Naive thymus-derived CD4-positive, alpha-beta T cell (primary cell): ENCODE measurements at regions of chr1 and their contacts with region 1.

Region 1: GRCh38 chr1:186375088-186375953 is at the starts of genes ODR4 and TPR:
- DNase-seq: peak; percentile 92 to 98 (median 97)
- ATAC-seq: peak; percentile 88
- H3K4me3 ChIP-seq: peak within 1 kb of the TSS; percentile 98
- H3K4me3 Mint-ChIP-seq: peak within 1 kb of the TSS; percentile 90 to 99 (median 98)
- H3K27ac ChIP-seq: peak within 1 kb of the TSS; percentile 93
- H3K27ac Mint-ChIP-seq: peak within 1 kb of the TSS; percentile 91 to 99 (median 97)
- H3K4me1 ChIP-seq: peaks cover 24 to 25% of the 10 kb centered on the region in 2 donors
- H3K4me1 Mint-ChIP-seq: peaks cover 28 to 70% (median 54%) of the 10 kb centered on the region in 7 donors
- H3K27me3 ChIP-seq: no peaks in the 10 kb centered on the region
- H3K27me3 Mint-ChIP-seq: no peaks in the 10 kb centered on the region
- total RNA-seq, gene ODR4: 13.6 to 19.6 (median 18.3) TPM
- total RNA-seq, gene TPR: 118 to 195 (median 158) TPM

Region 2: GRCh38 chr1:184973272-184974055 is 1401.9 kb before region 1 on chr1:
- CTCF ChIA-PET with region 1: no interaction called
- POLR2A ChIA-PET with region 1: no interaction called
- intact Hi-C with region 1: loop called in 1 of 2 experiments (anchors 10 kb)
- DNase-seq: peak in 1 of 9 donors; percentile 36
- ATAC-seq: peak; percentile 73
- H3K4me3 ChIP-seq: peak overlapping the region; percentile 63
- H3K4me3 Mint-ChIP-seq: peak overlapping the region; percentile 82 to 96 (median 90)
- H3K27ac ChIP-seq: peak overlapping the region; percentile 7
- H3K27ac Mint-ChIP-seq: peak overlapping the region; percentile 11 to 94 (median 58)
- H3K4me1 ChIP-seq: peaks cover 0 to 24% of the 10 kb centered on the region in 2 donors
- H3K4me1 Mint-ChIP-seq: peaks cover 9 to 56% (median 21%) of the 10 kb centered on the region in 7 donors
- H3K27me3 ChIP-seq: no peaks in the 10 kb centered on the region
- H3K27me3 Mint-ChIP-seq: peaks cover 12 to 38% (median 27%) of the 10 kb centered on the region in 5 donors

Region 3: DNA sequence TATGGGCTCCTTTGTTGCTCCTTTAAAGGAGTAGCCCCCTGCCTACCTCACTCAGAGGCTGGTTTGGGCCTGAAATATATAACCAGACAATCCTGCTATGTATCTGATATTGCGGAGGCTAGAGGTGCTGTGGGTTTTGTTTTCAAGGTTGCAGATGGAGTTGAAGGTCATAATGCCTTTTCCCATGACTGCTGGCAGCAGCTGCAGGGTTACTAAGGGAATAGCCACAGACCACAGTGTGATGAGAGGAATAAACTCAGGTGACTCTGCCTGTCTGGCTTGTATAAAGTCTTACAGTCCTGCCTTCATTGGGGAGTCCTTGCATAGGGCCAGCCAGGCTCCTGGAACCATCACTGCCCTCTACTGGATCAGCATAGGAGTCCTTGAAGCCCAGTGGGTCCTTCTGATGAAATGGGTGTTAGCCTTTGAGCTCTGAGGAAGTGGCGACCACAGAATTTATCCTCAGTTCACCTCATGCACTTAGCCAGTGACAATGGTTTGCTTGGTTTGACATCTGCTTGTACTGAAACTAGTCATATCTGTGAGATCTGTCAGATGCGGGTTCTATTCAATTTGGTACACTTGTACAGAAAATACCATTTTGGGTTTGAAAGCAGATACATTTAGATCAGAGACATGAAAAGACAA is 815.5 kb before region 1 on chr1:
- CTCF ChIA-PET with region 1: no interaction called
- POLR2A ChIA-PET with region 1: no interaction called
- intact Hi-C with region 1: loop called in 1 of 2 experiments (anchors 10 kb)
- DNase-seq: peak in 8 of 9 donors; percentile 9 to 57 (median 18)
- ATAC-seq: peak; percentile 91
- H3K4me3 ChIP-seq: no peak overlapping the region
- H3K4me3 Mint-ChIP-seq: peak overlapping the region in 8 of 10 donors; percentile 46 to 70 (median 58)
- H3K27ac ChIP-seq: no peak overlapping the region
- H3K27ac Mint-ChIP-seq: peak overlapping the region; percentile 63 to 91 (median 81)
- H3K4me1 ChIP-seq: peaks cover 26 to 35% of the 10 kb centered on the region in 2 donors
- H3K4me1 Mint-ChIP-seq: peaks cover 36 to 53% (median 48%) of the 10 kb centered on the region in 7 donors
- H3K27me3 ChIP-seq: no peaks in the 10 kb centered on the region
- H3K27me3 Mint-ChIP-seq: no peaks in the 10 kb centered on the region

Region 4: GRCh38 chr1:186272486-186272885 is 102.8 kb before region 1 on chr1:
- CTCF ChIA-PET with region 1: no interaction called
- POLR2A ChIA-PET with region 1: no interaction called
- intact Hi-C with region 1: loop called in 1 of 2 experiments (anchors 1 kb)
- DNase-seq: peak in 5 of 9 donors; percentile 36 to 55 (median 46)
- ATAC-seq: peak; percentile 50
- H3K4me3 ChIP-seq: no peak overlapping the region
- H3K4me3 Mint-ChIP-seq: no peak overlapping the region
- H3K27ac ChIP-seq: no peak overlapping the region
- H3K27ac Mint-ChIP-seq: peak overlapping the region in 2 of 9 donors; percentile 45 to 74
- H3K4me1 ChIP-seq: no peaks in the 10 kb centered on the region
- H3K4me1 Mint-ChIP-seq: peaks cover 6 to 24% (median 20%) of the 10 kb centered on the region in 7 donors
- H3K27me3 ChIP-seq: no peaks in the 10 kb centered on the region
- H3K27me3 Mint-ChIP-seq: peaks cover 0 to 11% (median 0%) of the 10 kb centered on the region in 5 donors

Region 5: GRCh38 chr1:186304982-186305949 is 70.1 kb before region 1 on chr1:
- CTCF ChIA-PET with region 1: interaction called, 4 read pairs
- POLR2A ChIA-PET with region 1: interaction called, 8 read pairs
- intact Hi-C with region 1: loop called (anchors 1 to 2 kb)
- DNase-seq: peak in 6 of 9 donors; percentile 34 to 51 (median 42)
- ATAC-seq: peak; percentile 39
- H3K4me3 ChIP-seq: no peak overlapping the region
- H3K4me3 Mint-ChIP-seq: peak overlapping the region in 9 of 10 donors; percentile 2 to 76 (median 45)
- H3K27ac ChIP-seq: peak overlapping the region; percentile 58
- H3K27ac Mint-ChIP-seq: peak overlapping the region; percentile 82 to 95 (median 91)
- H3K4me1 ChIP-seq: peaks cover 3 to 83% of the 10 kb centered on the region in 2 donors
- H3K4me1 Mint-ChIP-seq: peaks cover 35 to 66% (median 56%) of the 10 kb centered on the region in 7 donors
- H3K27me3 ChIP-seq: no peaks in the 10 kb centered on the region
- H3K27me3 Mint-ChIP-seq: no peaks in the 10 kb centered on the region

Region 6: DNA sequence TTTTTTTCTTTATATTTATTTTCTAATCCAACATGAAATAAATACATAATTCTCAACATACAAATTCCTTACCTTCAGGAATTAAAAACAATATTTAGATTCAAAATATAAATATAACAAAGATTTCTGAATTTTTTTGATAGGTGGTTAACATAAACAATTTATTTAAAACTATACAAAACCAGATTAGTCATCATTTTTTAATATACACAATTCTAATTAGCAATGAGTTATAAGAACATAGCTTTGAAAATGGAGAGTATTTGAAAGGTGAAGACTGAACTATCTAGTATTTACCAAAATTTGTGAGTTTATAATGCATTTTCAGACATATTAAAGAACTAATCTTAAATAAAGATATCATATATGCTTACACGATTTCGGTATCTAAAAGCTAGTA is 37.8 kb before region 1 on chr1:
- CTCF ChIA-PET with region 1: interaction called, 3 read pairs
- POLR2A ChIA-PET with region 1: interaction called, 4 read pairs
- intact Hi-C with region 1: loop called (anchors 5 kb)
- DNase-seq: no peak
- ATAC-seq: no peak
- H3K4me3 ChIP-seq: no peak overlapping the region
- H3K4me3 Mint-ChIP-seq: no peak overlapping the region
- H3K27ac ChIP-seq: no peak overlapping the region
- H3K27ac Mint-ChIP-seq: peak overlapping the region in 1 of 9 donors; percentile 44
- H3K4me1 ChIP-seq: no peaks in the 10 kb centered on the region
- H3K4me1 Mint-ChIP-seq: no peaks in the 10 kb centered on the region
- H3K27me3 ChIP-seq: no peaks in the 10 kb centered on the region
- H3K27me3 Mint-ChIP-seq: no peaks in the 10 kb centered on the region

Region 7: GRCh38 chr1:186420923-186421322 is 45.6 kb after region 1 on chr1:
- CTCF ChIA-PET with region 1: no interaction called
- POLR2A ChIA-PET with region 1: no interaction called
- intact Hi-C with region 1: loop called in 1 of 2 experiments (anchors 1 kb)
- DNase-seq: no peak
- ATAC-seq: no peak
- H3K4me3 ChIP-seq: no peak overlapping the region
- H3K4me3 Mint-ChIP-seq: peak overlapping the region in 1 of 10 donors; percentile 75
- H3K27ac ChIP-seq: no peak overlapping the region
- H3K27ac Mint-ChIP-seq: peak overlapping the region in 4 of 9 donors; percentile 7 to 93 (median 30)
- H3K4me1 ChIP-seq: no peaks in the 10 kb centered on the region
- H3K4me1 Mint-ChIP-seq: peaks cover 0 to 28% (median 3%) of the 10 kb centered on the region in 7 donors
- H3K27me3 ChIP-seq: no peaks in the 10 kb centered on the region
- H3K27me3 Mint-ChIP-seq: no peaks in the 10 kb centered on the region

Region 8: GRCh38 chr1:186535388-186536133 is 160.2 kb after region 1 on chr1:
- CTCF ChIA-PET with region 1: no interaction called
- POLR2A ChIA-PET with region 1: no interaction called
- intact Hi-C with region 1: no loop called
- DNase-seq: no peak
- ATAC-seq: no peak
- H3K4me3 ChIP-seq: no peak overlapping the region
- H3K4me3 Mint-ChIP-seq: no peak overlapping the region
- H3K27ac ChIP-seq: no peak overlapping the region
- H3K27ac Mint-ChIP-seq: no peak overlapping the region
- H3K4me1 ChIP-seq: no peaks in the 10 kb centered on the region
- H3K4me1 Mint-ChIP-seq: no peaks in the 10 kb centered on the region
- H3K27me3 ChIP-seq: no peaks in the 10 kb centered on the region
- H3K27me3 Mint-ChIP-seq: peaks cover 0 to 6% (median 2%) of the 10 kb centered on the region in 5 donors